ENCODE measurements at regions of chr3 and their contacts with region 1.

Region 1: DNA sequence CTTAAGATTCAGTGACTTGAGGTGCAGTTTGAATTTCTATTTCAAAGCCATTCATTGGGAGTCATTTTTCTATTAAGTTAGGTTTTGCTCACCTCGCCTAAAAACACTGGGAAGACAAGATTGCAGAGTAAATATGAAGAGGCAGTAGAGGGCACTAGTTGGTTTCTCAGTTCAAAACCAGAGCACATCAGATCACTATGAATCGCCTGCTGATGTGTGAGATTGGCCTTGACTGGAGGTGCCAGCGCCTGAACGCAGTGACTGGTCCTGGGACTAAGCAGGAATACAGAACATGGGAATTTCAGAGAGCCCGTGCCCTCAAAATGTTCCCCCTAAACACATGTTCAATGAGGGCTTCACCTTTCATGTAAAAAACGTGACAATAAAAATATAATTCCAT is 229.0 kb downstream of the ITPR1 start:
- DNase-seq: peak; percentile 53
- H3K4me3 Mint-ChIP-seq: no peak overlapping the region
- H3K27ac Mint-ChIP-seq: peak overlapping the region; percentile 58
- H3K4me1 Mint-ChIP-seq: peaks cover 58% of the 10 kb centered on the region
- H3K27me3 Mint-ChIP-seq: no peaks in the 10 kb centered on the region

Region 2: DNA sequence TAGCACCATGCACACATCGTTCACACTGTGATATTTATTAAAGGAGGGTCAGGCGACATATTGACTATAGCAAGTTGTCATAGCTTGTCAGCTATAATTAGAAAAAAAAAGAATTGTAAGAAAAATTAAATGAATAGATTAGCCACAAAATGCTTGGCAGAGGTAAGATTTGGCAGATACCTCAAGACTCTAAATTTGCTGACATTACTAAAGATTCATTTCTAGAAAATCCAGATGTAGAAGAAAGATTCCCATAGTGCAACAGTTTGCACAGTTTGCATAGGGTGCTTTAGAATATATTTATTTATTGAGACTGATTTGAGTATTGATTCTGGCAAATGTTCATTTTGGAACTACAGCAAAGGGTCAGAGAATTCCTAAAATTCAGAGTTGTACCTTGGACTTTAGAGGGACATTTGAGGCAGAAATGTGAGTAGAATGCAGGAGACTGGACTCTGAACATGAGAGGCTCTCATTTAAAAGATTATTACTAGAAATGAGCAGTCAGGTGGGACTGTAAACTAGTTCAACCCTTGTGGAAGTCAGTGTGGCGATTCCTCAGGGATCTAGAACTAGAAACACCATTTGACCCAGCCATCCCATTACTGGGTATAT is 155.2 kb after region 1 on chr3:
- CTCF ChIA-PET with region 1: no interaction called
- DNase-seq: no peak
- H3K4me3 Mint-ChIP-seq: no peak overlapping the region
- H3K27ac Mint-ChIP-seq: no peak overlapping the region
- H3K4me1 Mint-ChIP-seq: peaks cover 10% of the 10 kb centered on the region
- H3K27me3 Mint-ChIP-seq: peaks cover 4% of the 10 kb centered on the region

Region 3: DNA sequence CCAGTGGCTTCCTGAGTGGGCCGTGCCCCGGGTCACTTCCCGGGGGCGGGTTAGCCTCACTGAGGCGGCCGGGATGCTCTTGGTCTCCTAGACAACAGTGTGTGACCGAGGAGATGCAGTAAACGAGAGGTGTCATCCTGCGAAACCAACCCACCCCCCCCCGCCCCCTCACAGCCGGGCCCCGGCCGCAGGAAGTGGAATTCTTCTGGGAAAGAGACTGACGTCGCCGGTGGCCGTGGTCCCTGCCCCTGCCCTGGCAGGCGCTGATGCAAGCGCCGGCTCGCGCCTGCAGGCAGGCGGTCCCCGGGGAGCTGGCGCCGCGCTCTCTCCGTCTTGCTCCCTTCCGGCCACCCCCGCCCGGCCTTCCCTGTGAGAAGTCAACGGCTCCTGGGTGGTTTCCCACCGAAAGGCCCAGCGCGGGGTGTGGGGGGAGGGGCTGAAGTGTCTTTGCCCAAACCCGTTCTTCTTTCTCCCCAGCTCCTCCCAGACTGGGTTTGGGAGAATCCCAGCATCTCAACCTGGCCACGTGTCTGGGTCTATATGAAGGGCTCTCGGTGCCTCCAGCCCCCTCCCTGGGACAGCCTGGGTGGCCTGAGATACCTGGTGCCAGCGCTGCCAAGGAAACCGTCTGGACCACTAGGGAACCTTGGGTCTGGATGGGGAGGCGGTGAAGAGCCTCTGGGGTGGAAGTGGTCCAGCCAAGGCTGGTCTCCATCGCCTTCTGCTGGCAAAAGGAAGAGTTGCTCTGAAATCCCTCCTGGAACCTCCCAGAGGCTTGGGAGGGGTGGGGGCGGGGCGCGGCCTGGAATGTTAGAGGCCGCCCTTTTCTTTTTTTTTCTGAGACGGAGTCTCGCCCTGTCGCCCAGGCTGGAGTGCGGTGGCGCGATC is 304.5 kb after region 1 on chr3:
- CTCF ChIA-PET with region 1: interaction called, 12 read pairs
- DNase-seq: peak; percentile 71
- H3K4me3 Mint-ChIP-seq: peak overlapping the region; percentile 76
- H3K27ac Mint-ChIP-seq: peak overlapping the region; percentile 45
- H3K4me1 Mint-ChIP-seq: peaks cover 51% of the 10 kb centered on the region
- H3K27me3 Mint-ChIP-seq: peaks cover 35% of the 10 kb centered on the region

Region 4: GRCh38 chr3:5057857-5058324 is 335.8 kb after region 1 on chr3:
- CTCF ChIA-PET with region 1: interaction called, 54 read pairs
- DNase-seq: peak; percentile 88
- H3K4me3 Mint-ChIP-seq: no peak overlapping the region
- H3K27ac Mint-ChIP-seq: no peak overlapping the region
- H3K4me1 Mint-ChIP-seq: peaks cover 26% of the 10 kb centered on the region
- H3K27me3 Mint-ChIP-seq: peaks cover 25% of the 10 kb centered on the region